ENCODE measurements at regions of chr11 and their contacts with region 1.

Region 1: GRCh38 chr11:60345489-60345888 is 18.4 kb downstream of the MS4A6E start:
- DNase-seq: no peak
- ATAC-seq: peak; percentile 56
- H3K4me3 Mint-ChIP-seq: no peak overlapping the region
- H3K27ac Mint-ChIP-seq: no peak overlapping the region
- H3K4me1 Mint-ChIP-seq: peaks cover 35% of the 10 kb centered on the region
- H3K27me3 Mint-ChIP-seq: no peaks in the 10 kb centered on the region
- CTCF ChIP-seq: no peak

Region 2: GRCh38 chr11:59822989-59823566 is 522.4 kb before region 1 on chr11:
- CTCF ChIA-PET with region 1: no interaction called
- POLR2A ChIA-PET with region 1: no interaction called
- intact Hi-C with region 1: loop called (anchors 10 kb)
- DNase-seq: no peak
- ATAC-seq: peak; percentile 75
- H3K4me3 Mint-ChIP-seq: no peak overlapping the region
- H3K27ac Mint-ChIP-seq: no peak overlapping the region
- H3K4me1 Mint-ChIP-seq: peaks cover 12% of the 10 kb centered on the region
- H3K27me3 Mint-ChIP-seq: no peaks in the 10 kb centered on the region
- CTCF ChIP-seq: peak; percentile 23

Region 3: GRCh38 chr11:60334005-60334620 is 11.4 kb before region 1 on chr11:
- CTCF ChIA-PET with region 1: interaction called, 97 read pairs
- POLR2A ChIA-PET with region 1: no interaction called
- intact Hi-C with region 1: loop called (anchors 2 kb)
- DNase-seq: peak; percentile 49
- ATAC-seq: peak; percentile 92
- H3K4me3 Mint-ChIP-seq: no peak overlapping the region
- H3K27ac Mint-ChIP-seq: no peak overlapping the region
- H3K4me1 Mint-ChIP-seq: peaks cover 20% of the 10 kb centered on the region
- H3K27me3 Mint-ChIP-seq: no peaks in the 10 kb centered on the region
- CTCF ChIP-seq: no peak

Region 4: DNA sequence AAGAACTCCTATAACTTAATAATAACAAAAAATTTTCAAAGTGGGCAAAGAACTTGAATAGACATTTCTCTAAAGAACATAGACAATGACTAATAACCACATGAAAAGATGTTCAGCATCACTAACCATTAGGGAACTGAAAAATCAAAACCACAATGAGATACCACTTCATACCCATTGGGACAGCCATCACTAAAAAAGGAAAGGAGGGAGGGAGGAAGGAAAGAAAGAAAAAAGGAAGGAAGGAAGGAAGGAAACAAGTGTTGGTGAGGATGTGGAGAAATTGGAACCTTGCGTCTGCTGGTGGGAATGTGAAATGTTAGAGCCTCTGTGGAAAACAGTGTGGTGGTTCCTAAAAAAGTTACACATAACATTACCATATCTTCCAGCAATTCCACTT is 225.5 kb after region 1 on chr11:
- CTCF ChIA-PET with region 1: no interaction called
- POLR2A ChIA-PET with region 1: interaction called, 4 read pairs
- intact Hi-C with region 1: loop called (anchors 5 kb)
- DNase-seq: no peak
- ATAC-seq: peak; percentile 96
- H3K4me3 Mint-ChIP-seq: peak overlapping the region; percentile 7
- H3K27ac Mint-ChIP-seq: peak overlapping the region; percentile 56
- H3K4me1 Mint-ChIP-seq: peaks cover 30% of the 10 kb centered on the region
- H3K27me3 Mint-ChIP-seq: peaks cover 3% of the 10 kb centered on the region
- CTCF ChIP-seq: no peak

Region 5: DNA sequence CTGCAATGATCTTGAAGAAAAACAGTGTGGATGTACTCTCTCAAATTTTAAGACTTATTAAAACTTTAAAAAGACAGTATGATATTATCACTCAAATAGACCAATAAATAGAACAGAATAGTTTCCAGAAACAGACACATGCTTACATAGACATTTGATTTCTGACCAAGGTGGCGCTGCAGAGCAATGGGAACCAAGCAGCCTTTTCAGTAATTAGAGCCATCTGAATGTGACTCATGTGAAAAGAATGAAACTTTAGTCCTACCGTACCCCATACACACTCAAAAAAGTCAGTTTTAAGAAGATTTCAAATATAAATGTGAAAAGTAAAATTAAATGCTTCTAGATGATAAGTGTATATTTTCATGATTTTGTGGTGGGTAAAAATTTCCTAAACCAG is 279.8 kb after region 1 on chr11:
- CTCF ChIA-PET with region 1: interaction called, 50 read pairs
- POLR2A ChIA-PET with region 1: no interaction called
- intact Hi-C with region 1: no loop called
- DNase-seq: no peak
- ATAC-seq: peak; percentile 47
- H3K4me3 Mint-ChIP-seq: no peak overlapping the region
- H3K27ac Mint-ChIP-seq: no peak overlapping the region
- H3K4me1 Mint-ChIP-seq: peaks cover 14% of the 10 kb centered on the region
- H3K27me3 Mint-ChIP-seq: no peaks in the 10 kb centered on the region
- CTCF ChIP-seq: no peak